Dorsolateral prefrontal cortex (tissue), 120 donors: ENCODE measurements at regions of chr4 and their contacts with region 1.

Region 1: DNA sequence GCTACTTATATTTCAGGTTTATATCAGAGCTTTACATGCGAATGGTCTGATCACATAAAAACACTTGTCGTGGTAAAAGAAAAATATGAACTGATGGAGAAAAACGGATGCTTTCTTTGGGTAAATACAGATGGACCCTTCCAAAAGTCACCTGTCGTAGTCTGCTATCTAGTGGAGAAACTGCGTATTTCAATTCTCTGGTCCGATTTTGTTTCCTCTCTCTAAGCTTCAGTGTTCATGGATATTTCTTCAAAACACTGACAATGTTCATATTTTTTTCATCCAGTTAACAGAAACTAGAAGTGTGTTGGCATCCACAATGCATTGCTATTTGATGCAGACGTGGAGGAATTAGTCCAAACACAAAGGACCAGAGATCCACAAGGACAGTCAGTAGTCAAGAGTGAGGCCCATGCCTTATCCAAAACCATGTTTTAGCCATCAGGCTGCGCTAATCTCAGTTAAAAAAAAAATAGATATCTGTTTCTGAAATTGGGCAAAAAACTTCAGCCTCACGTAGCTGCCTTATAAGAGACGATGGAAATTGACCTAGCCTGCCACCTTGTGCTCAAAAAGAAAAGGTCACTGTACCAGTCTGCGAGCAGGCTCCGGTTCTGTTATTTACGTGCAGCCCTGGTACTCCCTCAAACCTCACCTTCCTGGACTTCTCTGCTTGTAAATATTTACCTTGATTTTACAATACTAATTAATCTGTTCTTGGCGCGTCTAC is 16.0 kb downstream of the MEPE start:
- DNase-seq: peak; percentile 28 to 78 (median 64)
- H3K4me3 ChIP-seq: peak overlapping the region in 57 of 59 donors; percentile 7 to 66 (median 48)
- H3K27ac ChIP-seq: peak overlapping the region; percentile 52 to 94 (median 86)
- H3K27me3 ChIP-seq: no peaks in the 10 kb centered on the region
- CTCF ChIP-seq: peak in 54 of 56 donors; percentile 50 to 88 (median 66)

Region 2: GRCh38 chr4:87375719-87376291 is 473.0 kb before region 1 on chr4:
- intact Hi-C with region 1: loop called (anchors 5 to 10 kb)
- DNase-seq: no peak
- H3K4me3 ChIP-seq: no peak overlapping the region
- H3K27ac ChIP-seq: peak overlapping the region in 4 of 59 donors; percentile 10 to 36 (median 12)
- H3K27me3 ChIP-seq: no peaks in the 10 kb centered on the region
- CTCF ChIP-seq: peak; percentile 45 to 85 (median 69)

Region 3: GRCh38 chr4:87543835-87544461 is 304.8 kb before region 1 on chr4:
- intact Hi-C with region 1: loop called in 1 of 2 experiments (anchors 5 kb)
- DNase-seq: peak in 2 of 10 donors; percentile 37 to 58
- H3K4me3 ChIP-seq: no peak overlapping the region
- H3K27ac ChIP-seq: peak overlapping the region in 53 of 59 donors; percentile 19 to 94 (median 80)
- H3K27me3 ChIP-seq: no peaks in the 10 kb centered on the region
- CTCF ChIP-seq: peak; percentile 34 to 85 (median 72)

Region 4: DNA sequence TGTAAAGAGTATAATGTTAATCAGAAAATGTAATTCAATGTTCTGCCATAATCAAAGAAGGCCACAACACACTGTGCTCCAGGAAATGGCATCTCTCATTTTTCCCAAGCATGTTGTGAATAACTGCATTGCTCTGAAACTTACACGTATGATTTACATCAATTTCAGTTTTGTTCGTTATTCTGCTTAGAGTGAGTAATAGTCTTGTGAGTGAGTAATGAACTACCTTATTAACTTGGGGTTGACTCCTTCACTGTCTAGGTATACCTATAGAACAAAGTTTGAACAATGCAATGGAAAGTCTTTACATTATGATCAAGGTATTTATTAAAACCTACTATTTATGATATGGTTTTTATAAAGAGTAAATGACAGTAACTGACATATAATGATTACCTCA is 67.2 kb before region 1 on chr4:
- intact Hi-C with region 1: no loop called
- DNase-seq: no peak
- H3K4me3 ChIP-seq: no peak overlapping the region
- H3K27ac ChIP-seq: no peak overlapping the region
- H3K27me3 ChIP-seq: no peaks in the 10 kb centered on the region
- CTCF ChIP-seq: no peak

Region 5: GRCh38 chr4:87865960-87866598 is 17.3 kb after region 1 on chr4:
- intact Hi-C with region 1: no loop called
- DNase-seq: no peak
- H3K4me3 ChIP-seq: no peak overlapping the region
- H3K27ac ChIP-seq: no peak overlapping the region
- H3K27me3 ChIP-seq: no peaks in the 10 kb centered on the region
- CTCF ChIP-seq: no peak

Region 6: DNA sequence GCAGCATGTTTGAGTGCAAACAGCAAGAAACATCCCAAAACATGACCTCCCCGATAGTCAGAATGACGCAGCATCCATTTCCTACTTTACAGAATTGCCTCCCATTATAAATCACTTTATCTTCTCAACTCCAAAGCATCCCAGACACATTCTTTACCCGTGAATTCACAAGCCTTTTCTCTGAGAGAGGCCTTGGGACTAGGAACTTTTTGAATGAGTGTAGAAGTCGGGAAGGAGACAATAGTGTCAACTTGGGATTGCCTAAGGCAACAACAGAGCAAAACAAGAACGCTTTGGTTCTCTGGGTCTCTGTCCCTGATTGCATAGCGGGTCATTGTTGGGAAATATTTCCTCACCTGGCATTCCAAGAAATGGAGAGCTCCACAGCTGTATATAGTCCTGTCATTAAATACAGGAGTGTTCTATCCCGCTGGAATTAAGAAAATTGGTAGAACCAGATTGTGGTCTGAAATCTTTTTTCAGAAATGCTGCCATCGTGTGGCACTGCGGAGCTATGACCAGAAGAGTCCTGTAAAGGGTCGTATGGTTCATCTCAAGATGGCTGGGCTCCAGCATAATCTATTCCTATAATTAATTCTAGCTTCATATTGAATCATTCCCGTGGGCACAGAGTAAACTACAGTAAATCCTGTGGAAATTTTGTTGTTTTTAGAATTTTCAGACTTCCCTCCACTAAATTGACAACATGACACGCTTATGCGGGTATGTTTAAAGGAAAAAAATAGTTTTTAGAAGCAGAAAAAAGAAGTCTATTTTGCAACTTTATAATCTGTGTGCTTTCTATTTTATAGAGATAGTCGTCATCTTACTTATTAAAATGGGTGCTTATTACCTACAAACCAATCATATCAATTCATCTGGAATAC is 124.7 kb after region 1 on chr4:
- intact Hi-C with region 1: loop called in 1 of 2 experiments (anchors 2 kb)
- DNase-seq: peak in 8 of 10 donors; percentile 31 to 73 (median 60)
- H3K4me3 ChIP-seq: peak overlapping the region in 55 of 59 donors; percentile 3 to 67 (median 44)
- H3K27ac ChIP-seq: peak overlapping the region in 45 of 59 donors; percentile 2 to 97 (median 88)
- H3K27me3 ChIP-seq: no peaks in the 10 kb centered on the region
- CTCF ChIP-seq: peak; percentile 85 to 99 (median 92)

Region 7: DNA sequence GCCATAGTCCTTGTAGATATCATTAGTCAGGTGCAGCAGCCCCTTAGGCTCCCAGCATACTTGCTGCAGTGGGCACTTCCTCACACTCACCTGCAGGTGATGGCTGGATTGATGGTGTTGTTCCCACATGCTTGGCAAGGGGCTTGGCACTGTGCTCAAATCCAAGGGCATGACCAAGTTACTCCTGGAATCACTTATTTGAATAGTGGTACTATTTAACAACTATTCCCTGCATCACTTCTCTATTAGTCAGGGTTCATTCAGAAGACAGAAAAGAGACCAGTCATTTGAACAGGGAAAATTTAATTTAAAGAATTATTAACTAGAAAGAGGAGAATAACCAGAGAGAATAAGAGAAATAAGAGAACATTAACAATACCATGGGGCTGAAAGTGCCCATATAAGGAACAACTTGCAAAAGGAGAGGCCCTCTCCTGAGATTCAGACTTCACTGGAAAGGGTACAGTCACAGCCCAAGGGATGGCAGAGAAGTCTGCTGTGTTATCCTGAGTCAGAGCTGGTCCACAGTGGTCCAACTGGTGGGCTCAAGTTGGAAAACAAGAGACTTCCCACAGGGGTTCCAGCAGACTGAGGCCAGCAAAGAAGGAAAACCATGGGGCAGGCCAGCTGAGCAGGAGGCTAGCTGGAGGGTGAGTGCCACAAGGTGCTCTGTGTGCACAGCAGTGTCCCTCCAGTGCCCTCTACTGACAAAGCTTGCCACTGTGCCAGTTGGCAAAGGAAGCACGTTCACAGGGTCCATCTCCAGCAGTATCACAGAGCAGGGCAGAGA is 136.5 kb after region 1 on chr4:
- intact Hi-C with region 1: loop called in 1 of 2 experiments (anchors 5 kb)
- DNase-seq: peak; percentile 63 to 88 (median 81)
- H3K4me3 ChIP-seq: no peak overlapping the region
- H3K27ac ChIP-seq: peak overlapping the region in 46 of 59 donors; percentile 0 to 80 (median 40)
- H3K27me3 ChIP-seq: no peaks in the 10 kb centered on the region
- CTCF ChIP-seq: peak in 55 of 56 donors; percentile 40 to 83 (median 66)

Region 8: GRCh38 chr4:88211473-88212252 is 362.9 kb after region 1 on chr4:
- intact Hi-C with region 1: loop called (anchors 2 to 5 kb)
- DNase-seq: peak in 3 of 10 donors; percentile 5 to 49 (median 46)
- H3K4me3 ChIP-seq: no peak overlapping the region
- H3K27ac ChIP-seq: no peak overlapping the region
- H3K27me3 ChIP-seq: no peaks in the 10 kb centered on the region
- CTCF ChIP-seq: peak; percentile 67 to 92 (median 82)

Region 9: DNA sequence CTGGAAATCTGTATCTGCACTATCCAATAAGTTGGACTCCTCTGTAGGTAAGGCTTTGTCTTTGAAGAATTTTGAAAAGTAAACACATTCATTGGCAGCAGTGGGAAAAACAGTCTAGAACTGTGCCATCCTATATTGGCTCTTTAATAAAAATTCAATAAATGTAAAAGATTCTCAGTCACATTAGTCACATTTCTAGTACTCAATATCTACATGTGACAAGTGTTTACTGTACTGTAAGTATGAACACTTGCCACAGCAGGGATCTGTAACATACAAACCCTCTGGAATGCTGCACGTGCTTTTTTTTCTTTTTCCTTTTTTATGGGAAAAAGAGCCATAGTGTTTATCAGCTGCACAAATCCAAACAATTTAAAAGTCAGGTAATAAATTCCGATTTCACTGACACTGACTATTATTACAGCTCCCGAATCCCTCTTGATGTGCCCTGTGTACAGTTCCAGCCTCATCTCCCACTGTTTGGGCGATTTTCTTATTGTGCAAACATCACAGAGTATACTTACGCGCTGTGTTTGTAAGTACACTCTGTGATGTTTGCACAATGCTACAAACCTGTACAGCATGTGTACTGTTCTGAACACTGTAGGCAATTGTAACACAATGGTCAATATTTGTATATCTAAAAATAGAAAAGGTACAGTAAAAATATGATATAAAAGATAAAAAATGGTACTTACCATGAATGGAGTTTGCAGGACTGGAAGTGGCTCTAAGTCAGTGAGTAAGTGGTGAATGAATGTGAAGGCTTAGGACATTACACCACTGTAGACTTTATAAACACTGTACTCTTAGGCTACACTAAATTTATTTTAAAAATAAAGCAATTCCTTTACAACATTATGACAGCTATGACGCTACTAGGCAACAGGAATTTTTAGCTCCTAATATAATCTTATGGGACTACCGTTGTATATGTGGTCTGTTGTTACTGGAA is 666.0 kb after region 1 on chr4:
- intact Hi-C with region 1: loop called in 1 of 2 experiments (anchors 10 kb)
- DNase-seq: no peak
- H3K4me3 ChIP-seq: peak overlapping the region in 22 of 59 donors; percentile 3 to 46 (median 23)
- H3K27ac ChIP-seq: peak overlapping the region in 1 of 59 donors; percentile 68
- H3K27me3 ChIP-seq: no peaks in the 10 kb centered on the region
- CTCF ChIP-seq: no peak